Activated CD4-positive, alpha-beta T cell treated with anti-CD3 and anti-CD28 coated beads for 36 hours (primary cell): ENCODE measurements at regions of chr17 and their contacts with region 1.

Region 1: GRCh38 chr17:76726231-76726775 is at the start of gene JMJD6:
- DNase-seq: peak; percentile 97
- ATAC-seq: peak; percentile 87
- H3K4me3 Mint-ChIP-seq: peak within 1 kb of the TSS; percentile 97
- H3K27ac Mint-ChIP-seq: peak within 1 kb of the TSS; percentile 98
- H3K4me1 Mint-ChIP-seq: peaks cover 54% of the 10 kb centered on the region
- H3K27me3 Mint-ChIP-seq: no peaks in the 10 kb centered on the region
- total RNA-seq, gene JMJD6: 51.3 to 65.5 TPM

Region 2: GRCh38 chr17:76714822-76715495 is 11.3 kb before region 1 on chr17:
- CTCF ChIA-PET with region 1: interaction called, 22 read pairs
- POLR2A ChIA-PET with region 1: interaction called, 8 read pairs
- intact Hi-C with region 1: loop called (anchors 1 kb)
- DNase-seq: peak; percentile 87
- ATAC-seq: no peak
- H3K4me3 Mint-ChIP-seq: no peak overlapping the region
- H3K27ac Mint-ChIP-seq: peak overlapping the region; percentile 68
- H3K4me1 Mint-ChIP-seq: peaks cover 38% of the 10 kb centered on the region
- H3K27me3 Mint-ChIP-seq: no peaks in the 10 kb centered on the region

Region 3: GRCh38 chr17:76781056-76781982 is 55.0 kb after region 1 on chr17:
- CTCF ChIA-PET with region 1: interaction called, 3 read pairs
- POLR2A ChIA-PET with region 1: interaction called, 4 read pairs
- intact Hi-C with region 1: loop called in 1 of 2 experiments (anchors 1 kb)
- DNase-seq: peak; percentile 20
- ATAC-seq: no peak
- H3K4me3 Mint-ChIP-seq: no peak overlapping the region
- H3K27ac Mint-ChIP-seq: no peak overlapping the region
- H3K4me1 Mint-ChIP-seq: no peaks in the 10 kb centered on the region
- H3K27me3 Mint-ChIP-seq: no peaks in the 10 kb centered on the region